ENCODE measurements at regions of chr1 and their contacts with region 1.

Region 1: GRCh38 chr1:4447778-4448420 is 206.5 kb upstream of the AJAP1 start:
- DNase-seq: peak; percentile 48

Region 2: DNA sequence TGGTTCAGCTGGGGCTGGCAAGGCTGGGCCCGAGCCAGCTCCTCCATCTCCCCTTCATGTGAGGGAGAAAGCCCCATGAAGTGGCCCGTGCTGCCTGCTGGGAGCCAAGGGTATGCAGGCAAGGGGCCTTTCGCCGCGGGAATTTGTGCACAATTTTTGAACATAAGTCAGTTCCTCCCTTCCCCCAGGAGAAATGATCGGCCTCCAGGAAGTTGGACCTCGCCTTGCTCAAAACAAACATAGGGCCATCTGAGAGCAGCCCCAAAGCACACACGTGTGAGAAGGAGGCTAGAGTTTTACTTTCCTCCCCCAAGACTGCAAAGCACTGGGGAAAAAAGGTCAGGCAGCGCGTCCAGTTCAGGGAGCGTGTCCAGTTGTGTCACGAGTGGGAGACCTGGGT is 1314.2 kb before region 1 on chr1:
- intact Hi-C with region 1: loop called in 1 of 2 experiments (anchors 5 kb)
- DNase-seq: no peak

Region 3: DNA sequence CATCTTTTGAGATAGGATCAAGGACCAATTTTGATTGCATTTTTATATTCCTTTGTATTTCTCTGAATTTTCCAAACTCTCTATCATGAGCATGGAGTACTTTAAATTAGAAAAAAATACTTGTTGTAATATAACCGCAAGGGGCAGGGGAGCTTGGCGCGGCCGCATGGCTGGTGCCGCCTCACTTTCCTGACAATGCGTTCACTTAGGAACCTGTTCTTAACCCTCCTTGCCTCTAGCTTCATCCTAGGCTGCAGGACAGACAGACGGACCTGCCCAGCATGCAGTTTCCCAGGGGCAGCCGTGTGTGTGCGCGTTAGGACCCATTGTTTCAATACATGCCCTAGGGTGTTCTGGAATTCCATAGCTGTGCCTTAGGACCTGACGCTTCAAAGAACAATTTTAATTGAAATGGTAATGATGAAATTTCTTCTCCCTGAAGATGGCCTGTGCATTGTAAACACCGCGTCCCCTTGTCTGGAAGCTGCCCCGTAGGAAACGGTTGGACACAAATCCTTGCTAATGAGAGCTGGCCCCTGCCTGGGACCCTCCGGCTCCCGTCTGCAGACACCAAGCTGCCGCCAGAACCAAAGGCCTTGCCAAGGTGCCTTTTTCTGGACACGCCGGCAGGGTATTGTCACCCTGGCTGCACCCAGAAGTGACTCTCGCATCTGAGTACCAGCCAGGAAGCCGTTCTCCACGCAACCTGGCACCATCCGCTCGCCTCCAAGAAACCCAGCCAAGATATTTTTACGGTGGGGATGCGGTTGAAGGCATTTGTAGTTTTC is 1077.9 kb after region 1 on chr1:
- intact Hi-C with region 1: loop called in 1 of 2 experiments (anchors 5 kb)
- DNase-seq: no peak